Caco-2 (cell line): ENCODE measurements at regions of chr11 and their contacts with region 1.

Region 1: DNA sequence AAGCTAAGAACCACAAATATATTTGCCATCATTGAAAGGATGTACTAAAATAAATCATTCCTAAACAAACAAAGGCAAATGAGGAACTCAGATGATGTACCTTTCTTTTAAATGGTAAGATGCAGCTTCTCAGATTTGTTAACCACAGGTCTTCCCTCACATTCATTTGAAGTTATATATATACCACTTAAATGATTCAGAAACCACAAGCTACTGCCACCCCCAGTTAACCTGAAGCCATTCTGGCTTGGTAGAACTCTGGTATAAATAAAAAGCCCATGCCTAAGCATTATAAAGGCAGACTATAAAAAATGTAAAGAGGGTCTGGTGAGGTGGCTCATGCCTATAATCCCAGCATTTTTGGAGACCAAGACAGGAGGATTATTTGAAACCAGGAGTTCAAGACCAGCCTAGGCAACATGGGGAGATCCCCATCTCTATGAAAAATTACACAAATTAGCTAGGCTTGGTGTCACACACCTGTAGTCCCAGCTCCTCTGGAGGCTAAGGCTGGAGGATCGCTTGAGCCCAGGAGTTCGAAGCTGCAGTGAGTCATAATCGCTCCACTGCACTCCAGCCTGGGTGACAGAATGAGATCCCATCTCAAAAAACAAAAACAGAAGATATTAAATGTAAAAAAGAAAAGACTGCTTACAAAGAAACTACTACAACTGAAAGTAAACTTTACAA is 1185.3 kb downstream of the JRKL start:
- DNase-seq: no peak
- H3K4me3 ChIP-seq: no peak overlapping the region
- H3K4me3 Mint-ChIP-seq: no peak overlapping the region
- H3K27ac Mint-ChIP-seq: no peak overlapping the region
- H3K4me1 ChIP-seq: no peaks in the 10 kb centered on the region; the same call in 1 of the 2 replicates
- H3K4me1 Mint-ChIP-seq: peaks cover 7% of the 10 kb centered on the region
- H3K27me3 ChIP-seq: no peaks in the 10 kb centered on the region
- H3K27me3 Mint-ChIP-seq: no peaks in the 10 kb centered on the region
- CTCF ChIP-seq: no peak

Region 2: DNA sequence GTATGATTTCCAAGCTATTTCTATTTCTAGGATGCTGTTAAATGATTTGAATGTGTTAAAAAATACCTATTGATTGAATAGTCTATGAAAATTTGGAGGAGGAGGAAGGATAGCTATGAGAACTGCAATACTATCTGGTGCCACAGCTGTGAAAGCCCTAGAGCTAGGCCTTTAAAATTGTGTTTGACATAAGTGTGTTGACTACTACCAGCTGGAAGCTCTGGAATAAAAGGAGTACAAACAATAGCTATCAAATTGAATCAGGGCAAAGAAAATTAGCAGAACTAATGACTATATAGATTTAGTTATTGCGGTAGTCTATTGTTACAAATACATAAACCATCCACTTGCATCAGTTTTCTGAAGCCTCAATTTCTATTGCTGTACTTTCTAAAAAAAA is 1320.8 kb after region 1 on chr11:
- CTCF ChIA-PET with region 1: no interaction called
- POLR2A ChIA-PET with region 1: no interaction called
- intact Hi-C with region 1: loop called (anchors 5 kb)
- DNase-seq: no peak
- H3K4me3 ChIP-seq: no peak overlapping the region
- H3K4me3 Mint-ChIP-seq: no peak overlapping the region
- H3K27ac Mint-ChIP-seq: no peak overlapping the region
- H3K4me1 ChIP-seq: no peaks in the 10 kb centered on the region
- H3K4me1 Mint-ChIP-seq: no peaks in the 10 kb centered on the region
- H3K27me3 ChIP-seq: no peaks in the 10 kb centered on the region
- H3K27me3 Mint-ChIP-seq: no peaks in the 10 kb centered on the region
- CTCF ChIP-seq: no peak